GM12878 (cell line): ENCODE measurements at regions of chr17 and their contacts with region 1.

Region 1: GRCh38 chr17:57567251-57567650 is 177.8 kb downstream of the CCDC182 start:
- DNase-seq: no peak
- ATAC-seq: no peak
- H3K4me3 ChIP-seq: no peak overlapping the region
- H3K27ac ChIP-seq: no peak overlapping the region
- H3K4me1 ChIP-seq: no peaks in the 10 kb centered on the region
- H3K27me3 ChIP-seq: no peaks in the 10 kb centered on the region
- CTCF ChIP-seq: no peak
- EP300 ChIP-seq: no peak
- POLR2A ChIP-seq: no peak
- RAD21 ChIP-seq: no peak

Region 2: GRCh38 chr17:57577751-57578607 is 10.7 kb after region 1 on chr17:
- CTCF ChIA-PET with region 1: no interaction called
- POLR2A ChIA-PET with region 1: interaction called, 4 read pairs
- RAD21 ChIA-PET with region 1: interaction called, 3 read pairs
- SMC1A ChIA-PET with region 1: interaction called, 11 read pairs
- in situ Hi-C with region 1: no loop called
- intact Hi-C with region 1: no loop called
- DNase-seq: no peak
- ATAC-seq: peak; percentile 28; the same call in 2 of the 3 replicates
- H3K4me3 ChIP-seq: no peak overlapping the region
- H3K27ac ChIP-seq: peak overlapping the region; percentile 38; the same call in 1 of the 2 replicates
- H3K4me1 ChIP-seq: peaks cover 10% of the 10 kb centered on the region
- H3K27me3 ChIP-seq: no peaks in the 10 kb centered on the region
- CTCF ChIP-seq: no peak
- EP300 ChIP-seq: no peak
- POLR2A ChIP-seq: no peak
- RAD21 ChIP-seq: no peak